ENCODE measurements at regions of chr19 and their contacts with region 1.

Region 1: DNA sequence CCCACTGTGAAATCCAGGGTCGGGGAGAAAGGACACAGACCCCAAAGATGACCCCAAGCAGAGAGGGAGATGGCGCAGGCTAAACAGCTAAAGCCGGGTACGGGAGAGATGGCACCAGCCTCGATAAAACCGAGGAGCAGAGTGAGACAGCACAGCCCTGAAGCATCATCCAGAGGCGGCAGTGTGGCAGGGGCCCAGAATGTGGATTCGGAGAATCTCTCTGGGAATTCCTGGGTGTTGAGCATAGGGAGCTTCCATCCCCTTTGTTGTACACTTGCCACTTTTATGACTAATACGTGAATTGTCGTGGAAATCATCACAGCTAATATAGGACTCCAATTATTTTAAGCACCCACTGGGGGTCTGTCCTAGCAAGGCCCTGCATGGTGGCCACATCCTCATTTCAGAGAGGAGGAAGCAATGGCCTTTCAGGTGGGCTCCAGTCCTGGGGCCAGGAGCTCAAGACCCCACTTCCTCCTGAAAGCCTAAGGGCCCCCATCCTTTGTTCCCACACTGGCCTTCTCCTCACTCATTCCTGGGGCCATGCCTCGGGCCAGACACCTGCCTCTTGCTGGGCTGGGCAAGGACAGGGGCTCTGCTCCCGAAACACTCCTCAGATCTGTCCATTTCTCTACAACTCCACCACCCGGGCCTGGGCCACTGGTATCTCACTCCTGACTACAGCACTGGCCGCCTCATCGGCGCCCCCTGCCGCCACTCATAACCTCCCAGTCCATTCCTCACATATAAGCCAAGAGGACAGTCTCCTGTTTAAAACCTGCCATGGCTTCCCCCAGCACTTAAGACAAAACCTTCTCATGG is 29.3 kb upstream of the ATP1A3 start:
- DNase-seq: no peak
- H3K4me3 ChIP-seq: no peak overlapping the region
- CTCF ChIP-seq: peak; percentile 40

Region 2: GRCh38 chr19:41998246-41999020 is 24.9 kb before region 1 on chr19:
- CTCF ChIA-PET with region 1: interaction called, 10 read pairs
- POLR2A ChIA-PET with region 1: no interaction called
- DNase-seq: no peak
- H3K4me3 ChIP-seq: no peak overlapping the region
- CTCF ChIP-seq: peak; percentile 87

Region 3: GRCh38 chr19:42010245-42011126 is 12.8 kb before region 1 on chr19:
- CTCF ChIA-PET with region 1: interaction called, 13 read pairs
- POLR2A ChIA-PET with region 1: no interaction called
- DNase-seq: peak; percentile 14
- H3K4me3 ChIP-seq: no peak overlapping the region
- CTCF ChIP-seq: no peak

Measured in AG04449 (cell line).